ENCODE measurements at regions of chr5 and their contacts with region 1.

Region 1: DNA sequence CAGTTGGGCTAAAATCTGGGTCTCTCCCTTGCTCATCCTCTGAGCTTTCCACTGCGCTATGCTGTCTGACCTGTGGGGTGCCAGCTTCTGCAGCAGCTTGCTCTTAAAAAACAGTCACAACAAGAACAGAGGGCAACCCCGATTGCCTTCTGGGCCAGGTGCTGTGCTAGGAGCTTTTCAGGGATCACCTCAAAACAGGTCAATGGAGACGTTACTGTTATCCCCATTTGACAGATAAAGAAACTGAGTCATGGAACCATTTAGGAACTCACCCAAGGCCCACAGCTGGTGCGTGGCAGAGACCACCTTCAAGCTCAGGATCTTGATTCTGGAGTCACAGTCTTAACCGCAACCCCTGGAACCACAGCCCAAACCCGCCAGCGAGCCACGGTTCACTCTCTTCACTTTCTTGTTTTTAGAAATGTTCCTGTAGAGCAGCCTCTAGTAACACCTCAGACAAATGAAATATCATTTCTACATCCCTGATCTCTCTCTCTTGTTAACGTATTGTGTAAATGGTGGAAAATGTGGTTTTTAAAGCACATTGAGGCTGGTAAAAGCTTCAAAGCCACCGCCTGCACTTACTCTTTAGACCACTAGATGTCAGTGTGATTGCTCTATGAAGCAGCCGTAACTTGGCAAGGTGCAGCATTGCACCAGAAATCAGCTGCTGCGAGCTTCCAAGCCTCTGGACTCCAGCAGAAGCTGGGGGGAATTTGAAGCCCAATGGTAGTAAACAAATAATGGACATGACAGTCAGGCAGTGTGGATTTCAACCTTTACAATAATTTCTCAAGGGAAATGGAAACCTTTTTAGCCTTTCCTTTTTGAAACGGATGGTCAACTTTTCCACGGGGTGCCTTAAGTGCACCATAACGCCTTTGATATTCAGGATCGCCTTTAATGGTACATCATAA is 1.7 kb downstream of the FYB1 start:
- DNase-seq: peak; percentile 80
- ATAC-seq: peak; percentile 94
- H3K4me3 ChIP-seq: no peak overlapping the region
- H3K27ac ChIP-seq: no peak overlapping the region
- H3K4me1 ChIP-seq: no peaks in the 10 kb centered on the region
- H3K27me3 ChIP-seq: no peaks in the 10 kb centered on the region; the same call in none of the 2 replicates
- CTCF ChIP-seq: peak; percentile 89
- POLR2A ChIP-seq: no peak
- RAD21 ChIP-seq: peak; percentile 76

Region 2: DNA sequence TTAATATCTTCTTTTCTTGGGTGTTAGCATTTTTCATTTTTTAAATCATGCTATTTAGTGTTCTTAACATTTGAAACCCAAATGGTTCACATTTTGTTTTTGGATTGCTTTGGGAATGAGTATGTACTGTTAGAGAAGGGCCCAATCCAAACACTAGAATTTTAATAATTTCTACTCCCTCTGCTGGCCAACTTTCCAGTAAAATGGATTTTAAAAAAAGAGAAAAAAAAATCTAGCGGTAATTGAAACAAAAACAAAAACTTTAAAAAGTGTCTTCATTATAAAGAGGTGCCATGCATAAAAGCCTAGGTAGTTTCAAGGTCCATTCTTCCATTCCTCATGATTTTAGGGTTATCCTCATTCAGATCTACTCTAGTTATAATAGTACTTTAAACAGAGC is 111.3 kb before region 1 on chr5:
- CTCF ChIA-PET with region 1: no interaction called
- POLR2A ChIA-PET with region 1: no interaction called
- dilution Hi-C with region 1: no loop called
- in situ Hi-C with region 1: no loop called
- intact Hi-C with region 1: no loop called
- DNase-seq: peak; percentile 27
- ATAC-seq: no peak
- H3K4me3 ChIP-seq: no peak overlapping the region
- H3K27ac ChIP-seq: no peak overlapping the region
- H3K4me1 ChIP-seq: peaks cover 9% of the 10 kb centered on the region
- H3K27me3 ChIP-seq: no peaks in the 10 kb centered on the region
- CTCF ChIP-seq: peak; percentile 45
- POLR2A ChIP-seq: no peak
- RAD21 ChIP-seq: no peak

Region 3: DNA sequence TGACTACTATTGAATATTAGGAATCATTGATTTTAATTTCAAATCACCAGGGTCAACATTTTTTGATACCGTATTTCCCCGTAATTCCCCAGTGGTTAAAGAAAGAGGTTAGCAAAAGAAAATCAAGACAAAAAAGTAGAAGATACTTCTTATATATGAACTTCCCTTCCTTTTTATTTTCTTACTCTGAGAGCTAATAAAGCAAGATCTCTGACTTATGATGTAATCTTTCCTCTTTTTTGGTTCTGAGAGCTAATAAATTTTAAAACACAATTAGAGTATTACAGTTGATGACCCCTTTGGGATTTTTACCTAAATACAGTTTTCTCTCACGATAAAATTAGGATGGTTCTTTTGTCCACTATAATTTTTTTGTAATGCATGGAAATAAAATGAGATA is 11.0 kb after region 1 on chr5:
- CTCF ChIA-PET with region 1: interaction called, 10 read pairs
- POLR2A ChIA-PET with region 1: no interaction called
- dilution Hi-C with region 1: no loop called
- in situ Hi-C with region 1: no loop called
- intact Hi-C with region 1: no loop called
- DNase-seq: no peak
- ATAC-seq: no peak
- H3K4me3 ChIP-seq: no peak overlapping the region
- H3K27ac ChIP-seq: no peak overlapping the region
- H3K4me1 ChIP-seq: no peaks in the 10 kb centered on the region
- H3K27me3 ChIP-seq: peaks cover 12% of the 10 kb centered on the region
- CTCF ChIP-seq: no peak
- POLR2A ChIP-seq: no peak
- RAD21 ChIP-seq: no peak

Region 4: DNA sequence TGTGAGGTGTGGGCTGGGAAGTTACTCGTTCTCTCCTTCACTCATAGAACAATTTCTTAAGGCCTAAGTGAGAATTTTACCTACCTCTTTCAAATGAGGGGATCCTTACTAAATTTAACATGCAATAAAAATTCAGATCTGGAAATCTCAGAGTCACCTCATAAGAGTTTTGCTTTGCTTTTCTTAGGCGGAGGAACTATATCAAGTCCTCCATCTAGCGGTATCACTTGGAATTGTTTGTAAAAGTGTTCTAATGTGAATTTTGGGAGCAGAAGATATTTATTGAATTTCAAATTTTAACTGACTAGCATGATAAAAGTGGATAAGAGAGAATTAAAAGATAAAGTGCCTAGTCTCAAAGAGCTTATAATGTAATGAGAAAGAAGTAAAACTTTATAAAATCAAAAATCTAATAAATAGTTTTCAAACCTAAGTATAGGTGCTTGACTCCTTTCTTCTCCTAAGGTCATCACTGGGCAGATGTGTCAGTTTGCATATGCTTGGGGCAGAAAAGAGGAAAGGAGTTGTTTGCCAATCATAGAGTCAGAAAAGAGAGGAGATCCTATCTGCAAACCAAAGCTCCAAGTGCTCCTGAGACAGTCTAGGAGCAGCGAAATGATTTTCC is 352.9 kb after region 1 on chr5:
- CTCF ChIA-PET with region 1: interaction called, 7 read pairs
- POLR2A ChIA-PET with region 1: no interaction called
- dilution Hi-C with region 1: no loop called
- in situ Hi-C with region 1: loop called (anchors 25 kb)
- intact Hi-C with region 1: loop called (anchors 1 kb)
- DNase-seq: peak; percentile 61
- ATAC-seq: peak; percentile 79
- H3K4me3 ChIP-seq: no peak overlapping the region
- H3K27ac ChIP-seq: no peak overlapping the region
- H3K4me1 ChIP-seq: no peaks in the 10 kb centered on the region
- H3K27me3 ChIP-seq: peaks cover 13% of the 10 kb centered on the region
- CTCF ChIP-seq: peak; percentile 79
- POLR2A ChIP-seq: no peak
- RAD21 ChIP-seq: peak; percentile 82